ENCODE measurements at regions of chr14 and their contacts with region 1.

Region 1: DNA sequence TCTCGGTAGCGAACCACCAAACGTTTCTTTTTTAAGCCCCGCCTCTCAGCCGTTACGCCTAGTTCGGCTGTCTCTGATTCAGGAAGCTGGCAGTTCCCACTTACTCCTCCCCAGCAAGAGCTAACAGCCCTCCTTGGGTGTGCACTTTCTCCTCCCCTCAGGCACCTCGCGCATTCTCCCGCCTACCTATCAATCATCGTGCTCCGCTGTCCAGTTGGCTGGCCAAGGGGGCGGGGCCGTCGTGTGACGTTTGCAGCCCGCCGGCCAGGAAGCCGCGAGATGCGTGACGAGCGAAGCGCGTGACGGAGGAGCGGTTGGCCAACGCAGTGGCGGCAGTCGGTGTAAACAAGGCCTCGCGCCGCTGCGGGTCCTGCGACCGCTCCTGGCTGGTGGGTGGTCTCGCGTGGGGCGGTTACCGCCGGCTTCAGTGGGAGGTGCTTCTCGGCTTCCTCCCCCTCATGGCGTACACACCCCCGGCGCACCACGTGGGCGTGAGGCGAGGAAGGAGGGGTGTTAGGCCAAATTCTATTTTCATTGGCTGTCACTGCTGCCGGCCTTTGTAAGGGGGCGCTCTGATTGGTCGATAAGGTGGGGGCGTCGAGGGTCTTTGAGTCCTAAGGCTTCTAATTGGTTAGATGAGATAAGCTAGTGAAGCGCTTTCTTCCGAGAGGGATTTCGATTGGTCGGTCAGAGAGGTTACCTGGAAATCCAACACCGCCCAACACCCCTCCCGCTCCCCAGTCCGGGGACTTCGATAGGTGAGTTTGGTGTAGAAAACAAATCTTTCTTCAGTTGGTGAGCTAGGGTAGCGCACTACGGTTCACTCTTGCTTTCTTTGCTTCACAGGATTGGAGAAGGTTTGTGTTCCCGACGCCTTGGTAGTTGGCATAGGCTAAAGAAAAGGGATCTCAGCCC is at the starts of genes DCAF11 and NRL:
- DNase-seq: peak; percentile 97 to 100 (median 100)
- ATAC-seq: peak; percentile 90
- H3K4me3 ChIP-seq: peak within 1 kb of the TSS; percentile 99
- H3K4me3 Mint-ChIP-seq: peak within 1 kb of the TSS; percentile 93 to 100 (median 96)
- H3K27ac ChIP-seq: peak within 1 kb of the TSS; percentile 93
- H3K27ac Mint-ChIP-seq: peak within 1 kb of the TSS; percentile 96 to 100 (median 99)
- H3K4me1 ChIP-seq: peaks cover 18 to 20% of the 10 kb centered on the region in 2 donors
- H3K4me1 Mint-ChIP-seq: peaks cover 18 to 44% (median 37%) of the 10 kb centered on the region in 7 donors
- H3K27me3 ChIP-seq: no peaks in the 10 kb centered on the region
- H3K27me3 Mint-ChIP-seq: peaks cover 0 to 3% (median 0%) of the 10 kb centered on the region in 5 donors
- total RNA-seq, gene DCAF11: 71.9 to 90.1 (median 83.3) TPM
- total RNA-seq, gene NRL: 2.1 to 4.5 (median 3.8) TPM

Region 2: GRCh38 chr14:23555882-23556699 is 558.7 kb before region 1 on chr14 and contains the start of gene THTPA:
- CTCF ChIA-PET with region 1: no interaction called
- POLR2A ChIA-PET with region 1: interaction called, 4 read pairs
- intact Hi-C with region 1: loop called in 1 of 2 experiments (anchors 10 kb)
- DNase-seq: peak; percentile 84 to 96 (median 89)
- ATAC-seq: peak; percentile 94
- H3K4me3 ChIP-seq: peak within 1 kb of the TSS; percentile 84
- H3K4me3 Mint-ChIP-seq: peak within 1 kb of the TSS; percentile 80 to 99 (median 96)
- H3K27ac ChIP-seq: peak within 1 kb of the TSS; percentile 83
- H3K27ac Mint-ChIP-seq: peak within 1 kb of the TSS; percentile 78 to 97 (median 94)
- H3K4me1 ChIP-seq: peaks cover 10 to 16% of the 10 kb centered on the region in 2 donors
- H3K4me1 Mint-ChIP-seq: peaks cover 18 to 45% (median 38%) of the 10 kb centered on the region in 7 donors
- H3K27me3 ChIP-seq: no peaks in the 10 kb centered on the region
- H3K27me3 Mint-ChIP-seq: peaks cover 0 to under 1% (median 0%) of the 10 kb centered on the region in 5 donors
- total RNA-seq, gene THTPA: 16.4 to 26.7 (median 19.2) TPM

Region 3: GRCh38 chr14:23776288-23776687 is 338.5 kb before region 1 on chr14:
- CTCF ChIA-PET with region 1: no interaction called
- POLR2A ChIA-PET with region 1: no interaction called
- intact Hi-C with region 1: no loop called
- DNase-seq: no peak
- ATAC-seq: no peak
- H3K4me3 ChIP-seq: no peak overlapping the region
- H3K4me3 Mint-ChIP-seq: no peak overlapping the region
- H3K27ac ChIP-seq: no peak overlapping the region
- H3K27ac Mint-ChIP-seq: no peak overlapping the region
- H3K4me1 ChIP-seq: no peaks in the 10 kb centered on the region
- H3K4me1 Mint-ChIP-seq: no peaks in the 10 kb centered on the region
- H3K27me3 ChIP-seq: no peaks in the 10 kb centered on the region
- H3K27me3 Mint-ChIP-seq: peaks cover 16 to 55% (median 39%) of the 10 kb centered on the region in 5 donors

Region 4: DNA sequence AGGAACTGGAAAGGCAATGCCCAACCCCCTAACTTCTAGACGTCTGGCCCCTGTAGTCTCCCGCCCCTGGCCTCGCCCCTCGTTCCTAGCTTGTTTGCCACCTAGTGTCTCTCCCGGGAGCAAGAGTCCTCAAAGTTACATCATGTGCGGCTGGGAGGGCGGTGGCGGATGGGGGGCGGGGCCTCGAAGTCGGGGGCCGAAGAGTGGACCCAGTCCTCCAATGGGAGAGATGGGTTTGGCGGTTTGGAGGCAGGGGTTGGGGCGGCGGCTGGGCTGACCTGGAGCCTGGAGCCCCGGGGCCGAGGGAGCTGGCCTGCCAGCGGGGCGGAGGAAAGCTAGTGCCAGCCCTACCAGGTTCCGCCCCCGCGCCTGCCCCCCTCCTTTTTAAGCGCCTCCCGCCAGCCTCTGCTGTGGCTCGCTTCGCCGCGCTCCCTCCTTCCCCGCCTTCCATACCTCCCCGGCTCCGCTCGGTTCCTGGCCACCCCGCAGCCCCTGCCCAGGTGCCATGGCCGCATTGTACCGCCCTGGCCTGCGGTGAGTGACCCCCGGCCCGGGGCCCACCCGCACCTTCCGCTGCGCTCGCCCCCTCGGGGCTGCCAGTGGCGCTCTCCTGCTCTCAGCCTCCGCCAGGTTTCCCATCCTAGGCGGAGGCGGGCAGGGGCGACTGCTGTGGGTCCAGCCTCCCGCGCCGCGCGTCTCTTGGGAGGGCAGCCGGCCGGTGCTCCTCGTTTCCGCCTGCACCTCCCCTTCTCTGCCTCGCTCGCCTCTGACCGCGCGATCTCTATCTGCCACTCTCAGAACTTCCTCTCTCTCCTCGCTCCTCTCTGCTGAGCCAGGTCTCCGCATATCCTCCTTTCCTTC is 20.7 kb before region 1 on chr14 and contains the start of gene PCK2:
- CTCF ChIA-PET with region 1: interaction called, 165 read pairs
- POLR2A ChIA-PET with region 1: interaction called, 38 read pairs
- intact Hi-C with region 1: loop called (anchors 1 kb)
- DNase-seq: peak; percentile 44 to 80 (median 56)
- ATAC-seq: peak; percentile 81
- H3K4me3 ChIP-seq: peak within 1 kb of the TSS; percentile 91
- H3K4me3 Mint-ChIP-seq: peak within 1 kb of the TSS; percentile 91 to 100 (median 98)
- H3K27ac ChIP-seq: peak within 1 kb of the TSS; percentile 92
- H3K27ac Mint-ChIP-seq: peak within 1 kb of the TSS; percentile 90 to 97 (median 96)
- H3K4me1 ChIP-seq: peaks cover 6 to 16% of the 10 kb centered on the region in 2 donors
- H3K4me1 Mint-ChIP-seq: peaks cover 28 to 47% (median 41%) of the 10 kb centered on the region in 7 donors
- H3K27me3 ChIP-seq: no peaks in the 10 kb centered on the region
- H3K27me3 Mint-ChIP-seq: no peaks in the 10 kb centered on the region
- total RNA-seq, gene PCK2: 9.1 to 56.2 (median 14.4) TPM

Region 5: GRCh38 chr14:24188251-24189058 is 73.7 kb after region 1 on chr14 and contains the start of gene IPO4:
- CTCF ChIA-PET with region 1: no interaction called
- POLR2A ChIA-PET with region 1: interaction called, 21 read pairs
- intact Hi-C with region 1: loop called (anchors 1 kb)
- DNase-seq: peak; percentile 75 to 97 (median 94)
- ATAC-seq: peak; percentile 97
- H3K4me3 ChIP-seq: peak within 1 kb of the TSS; percentile 89
- H3K4me3 Mint-ChIP-seq: peak within 1 kb of the TSS; percentile 89 to 96 (median 90)
- H3K27ac ChIP-seq: peak within 1 kb of the TSS; percentile 83
- H3K27ac Mint-ChIP-seq: peak within 1 kb of the TSS; percentile 82 to 96 (median 92)
- H3K4me1 ChIP-seq: peaks cover 15 to 16% of the 10 kb centered on the region in 2 donors
- H3K4me1 Mint-ChIP-seq: peaks cover 24 to 53% (median 47%) of the 10 kb centered on the region in 7 donors
- H3K27me3 ChIP-seq: no peaks in the 10 kb centered on the region
- H3K27me3 Mint-ChIP-seq: no peaks in the 10 kb centered on the region
- total RNA-seq, gene IPO4: 21.5 to 45.2 (median 42.2) TPM

Region 6: DNA sequence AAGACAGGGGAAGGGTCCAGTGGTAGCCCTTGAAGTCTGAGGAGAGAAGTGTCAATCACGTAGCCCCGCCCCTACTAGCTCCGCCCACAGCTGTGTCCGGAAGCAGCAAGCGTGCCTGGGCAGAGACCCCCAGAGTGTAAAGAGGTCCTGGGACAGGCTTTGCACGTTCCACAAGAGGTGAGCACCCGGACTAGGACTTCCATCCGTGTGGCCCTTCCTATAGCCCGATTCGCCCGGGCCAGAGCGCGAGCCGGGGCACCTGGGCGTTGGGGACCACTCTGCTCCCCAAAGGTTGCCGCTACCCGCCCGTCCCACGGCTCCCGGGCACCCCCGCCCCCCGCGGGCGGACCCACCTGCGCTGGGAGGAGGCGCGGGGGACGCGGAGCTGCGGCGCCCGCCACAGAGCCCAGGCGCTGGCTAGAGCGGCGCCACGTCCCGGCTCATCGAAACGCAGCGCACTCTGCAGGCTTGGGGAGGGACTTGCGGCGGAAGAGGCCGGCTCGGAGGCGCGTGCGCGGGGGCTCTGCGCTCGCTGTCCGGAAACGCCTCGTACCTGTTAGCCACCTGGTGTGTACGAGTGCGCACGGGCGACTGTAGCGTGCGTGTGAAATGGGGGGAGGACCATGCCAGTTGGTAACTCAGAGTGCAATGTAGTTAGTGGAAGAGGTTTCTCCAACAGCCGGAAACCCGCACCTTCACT is 156.5 kb after region 1 on chr14 and contains the start of gene RABGGTA:
- CTCF ChIA-PET with region 1: no interaction called
- POLR2A ChIA-PET with region 1: interaction called, 3 read pairs
- intact Hi-C with region 1: loop called in 1 of 2 experiments (anchors 1 kb)
- DNase-seq: peak; percentile 87 to 97 (median 96)
- ATAC-seq: peak; percentile 91
- H3K4me3 ChIP-seq: peak within 1 kb of the TSS; percentile 80
- H3K4me3 Mint-ChIP-seq: peak within 1 kb of the TSS; percentile 79 to 95 (median 92)
- H3K27ac ChIP-seq: peak within 1 kb of the TSS; percentile 98
- H3K27ac Mint-ChIP-seq: peak within 1 kb of the TSS; percentile 93 to 100 (median 98)
- H3K4me1 ChIP-seq: peaks cover 17 to 23% of the 10 kb centered on the region in 2 donors
- H3K4me1 Mint-ChIP-seq: peaks cover 30 to 52% (median 46%) of the 10 kb centered on the region in 7 donors
- H3K27me3 ChIP-seq: no peaks in the 10 kb centered on the region
- H3K27me3 Mint-ChIP-seq: no peaks in the 10 kb centered on the region
- total RNA-seq, gene RABGGTA: 49.7 to 76.5 (median 55.5) TPM

Region 7: GRCh38 chr14:24678801-24679247 is 564.0 kb after region 1 on chr14:
- CTCF ChIA-PET with region 1: no interaction called
- POLR2A ChIA-PET with region 1: no interaction called
- intact Hi-C with region 1: loop called in 1 of 2 experiments (anchors 10 kb)
- DNase-seq: peak; percentile 45 to 85 (median 78)
- ATAC-seq: peak; percentile 96
- H3K4me3 ChIP-seq: peak overlapping the region; percentile 33
- H3K4me3 Mint-ChIP-seq: peak overlapping the region; percentile 71 to 93 (median 86)
- H3K27ac ChIP-seq: no peak overlapping the region
- H3K27ac Mint-ChIP-seq: peak overlapping the region; percentile 33 to 95 (median 70)
- H3K4me1 ChIP-seq: peaks cover 17 to 44% of the 10 kb centered on the region in 2 donors
- H3K4me1 Mint-ChIP-seq: peaks cover 35 to 65% (median 57%) of the 10 kb centered on the region in 7 donors
- H3K27me3 ChIP-seq: no peaks in the 10 kb centered on the region
- H3K27me3 Mint-ChIP-seq: peaks cover 0 to 4% (median 0%) of the 10 kb centered on the region in 5 donors

Region 8: DNA sequence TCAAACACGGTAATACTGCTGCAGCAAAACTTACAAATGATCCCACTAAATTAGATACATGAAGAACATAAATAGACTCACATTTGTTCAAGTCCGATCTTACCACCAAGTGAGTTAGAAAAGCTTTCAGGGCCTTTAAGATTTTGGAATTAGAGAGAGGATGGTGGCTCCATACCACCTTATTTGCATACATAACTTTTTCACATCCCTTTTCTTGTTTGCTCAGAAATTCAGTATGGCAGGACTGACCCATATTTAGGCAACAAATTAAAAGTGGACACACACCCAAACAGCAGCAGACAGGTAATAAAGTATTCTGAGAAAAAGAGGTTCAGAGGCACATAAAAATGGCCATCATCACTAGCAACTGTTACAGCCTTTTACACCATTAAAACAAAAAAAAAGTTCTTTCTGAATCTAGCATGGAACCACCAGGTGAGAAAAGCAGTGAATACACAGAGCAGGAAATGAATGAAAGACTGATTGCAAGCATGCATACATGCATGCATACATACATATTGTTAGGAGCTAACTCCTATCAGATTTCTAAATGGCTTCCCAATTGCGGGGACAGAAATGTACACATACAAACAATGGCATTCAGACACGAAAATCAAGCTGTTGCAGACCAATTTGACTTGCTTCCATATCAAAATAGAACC is 911.8 kb after region 1 on chr14:
- CTCF ChIA-PET with region 1: no interaction called
- POLR2A ChIA-PET with region 1: no interaction called
- intact Hi-C with region 1: no loop called
- DNase-seq: no peak
- ATAC-seq: no peak
- H3K4me3 ChIP-seq: no peak overlapping the region
- H3K4me3 Mint-ChIP-seq: no peak overlapping the region
- H3K27ac ChIP-seq: no peak overlapping the region
- H3K27ac Mint-ChIP-seq: no peak overlapping the region
- H3K4me1 ChIP-seq: no peaks in the 10 kb centered on the region
- H3K4me1 Mint-ChIP-seq: no peaks in the 10 kb centered on the region
- H3K27me3 ChIP-seq: no peaks in the 10 kb centered on the region
- H3K27me3 Mint-ChIP-seq: peaks cover 0 to 8% (median 5%) of the 10 kb centered on the region in 5 donors